ENCODE measurements at regions of chr17 and their contacts with region 1.

Region 1: GRCh38 chr17:27544350-27545131 is 86.4 kb upstream of the LGALS9 start:
- DNase-seq: peak; percentile 48
- ATAC-seq: peak; percentile 74
- H3K4me3 Mint-ChIP-seq: peak overlapping the region; percentile 72
- H3K27ac Mint-ChIP-seq: peak overlapping the region; percentile 90
- H3K4me1 Mint-ChIP-seq: peaks cover 76% of the 10 kb centered on the region
- H3K27me3 Mint-ChIP-seq: no peaks in the 10 kb centered on the region
- CTCF ChIP-seq: no peak

Region 2: DNA sequence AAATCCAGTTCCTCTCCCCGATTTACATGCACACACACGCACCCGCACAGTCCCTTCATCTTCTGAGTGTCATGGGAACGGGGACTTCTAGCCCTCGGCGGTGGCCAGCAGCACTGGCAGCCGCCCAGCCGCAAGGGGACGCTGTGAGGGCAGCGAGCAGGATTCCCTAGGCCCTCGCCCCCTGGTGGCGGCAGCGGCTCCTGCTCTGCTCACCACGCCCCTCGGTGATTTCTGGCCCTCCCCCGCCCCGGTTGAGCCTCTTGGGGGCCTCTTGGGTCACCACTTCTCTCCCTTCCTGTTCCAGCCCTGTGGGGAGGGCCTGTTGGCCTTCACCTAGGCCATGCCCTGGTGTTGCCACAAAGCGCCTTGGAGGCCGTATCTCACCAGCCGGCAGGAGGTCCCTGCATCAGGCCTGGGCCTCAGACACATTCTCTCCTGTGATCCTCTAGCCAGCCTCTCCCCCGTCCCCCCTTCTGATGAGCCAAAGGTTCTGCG is 163.5 kb before region 1 on chr17:
- CTCF ChIA-PET with region 1: no interaction called
- POLR2A ChIA-PET with region 1: no interaction called
- intact Hi-C with region 1: loop called (anchors 5 kb)
- DNase-seq: peak; percentile 70
- ATAC-seq: peak; percentile 94
- H3K4me3 Mint-ChIP-seq: no peak overlapping the region
- H3K27ac Mint-ChIP-seq: no peak overlapping the region
- H3K4me1 Mint-ChIP-seq: peaks cover 6% of the 10 kb centered on the region
- H3K27me3 Mint-ChIP-seq: peaks cover 18% of the 10 kb centered on the region
- CTCF ChIP-seq: peak; percentile 35

Region 3: DNA sequence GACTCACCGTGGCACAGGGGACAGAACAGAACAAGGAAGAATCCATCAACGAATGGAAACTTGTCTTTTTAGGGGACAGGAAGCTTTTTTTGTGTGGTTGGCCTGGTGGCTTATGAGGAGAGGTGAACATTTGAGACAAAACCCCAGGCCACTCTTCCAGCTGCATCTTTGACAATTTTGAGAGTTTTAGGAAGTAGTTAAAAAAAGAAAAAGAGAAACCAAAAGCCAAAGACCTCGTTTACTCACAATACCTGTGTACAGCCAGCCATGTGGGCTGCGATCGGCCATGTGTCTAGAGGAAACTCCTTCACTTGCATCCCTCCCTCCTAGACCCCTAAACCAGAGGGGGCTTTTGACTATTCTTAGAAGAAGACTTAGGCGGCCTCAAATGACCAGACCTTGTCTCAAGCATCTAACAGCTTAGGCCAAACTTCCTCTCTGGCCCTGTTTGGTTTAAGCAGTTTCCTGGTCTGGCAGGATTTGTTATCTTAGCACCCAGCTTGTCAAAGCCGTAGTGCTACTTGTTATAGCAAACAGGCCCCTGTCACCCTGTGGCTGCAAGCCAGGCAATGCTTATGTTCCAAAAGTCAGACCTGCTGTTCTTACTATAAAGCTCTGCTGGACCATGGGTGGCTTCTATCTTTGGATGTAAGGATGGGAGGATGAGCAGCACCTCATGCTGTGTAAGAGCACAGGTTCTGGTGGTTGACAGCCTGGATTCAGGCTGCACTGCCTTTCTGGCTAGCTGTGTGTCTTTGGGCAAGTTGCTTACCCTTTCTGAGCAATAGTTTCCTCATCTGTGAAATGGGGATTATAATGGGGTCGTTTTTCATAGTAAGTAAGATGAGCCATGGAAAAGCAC is 70.6 kb before region 1 on chr17:
- CTCF ChIA-PET with region 1: no interaction called
- POLR2A ChIA-PET with region 1: interaction called, 23 read pairs
- intact Hi-C with region 1: loop called (anchors 1 kb)
- DNase-seq: no peak
- ATAC-seq: no peak
- H3K4me3 Mint-ChIP-seq: peak overlapping the region; percentile 71
- H3K27ac Mint-ChIP-seq: peak overlapping the region; percentile 99
- H3K4me1 Mint-ChIP-seq: peaks cover 84% of the 10 kb centered on the region
- H3K27me3 Mint-ChIP-seq: no peaks in the 10 kb centered on the region
- CTCF ChIP-seq: no peak

Region 4: GRCh38 chr17:27506348-27507231 is 38.0 kb before region 1 on chr17:
- CTCF ChIA-PET with region 1: no interaction called
- POLR2A ChIA-PET with region 1: interaction called, 15 read pairs
- intact Hi-C with region 1: loop called (anchors 1 kb)
- DNase-seq: peak; percentile 49
- ATAC-seq: peak; percentile 88
- H3K4me3 Mint-ChIP-seq: peak overlapping the region; percentile 62
- H3K27ac Mint-ChIP-seq: peak overlapping the region; percentile 83
- H3K4me1 Mint-ChIP-seq: peaks cover 46% of the 10 kb centered on the region
- H3K27me3 Mint-ChIP-seq: no peaks in the 10 kb centered on the region
- CTCF ChIP-seq: no peak

Region 5: GRCh38 chr17:27529230-27529796 is 15.2 kb before region 1 on chr17:
- CTCF ChIA-PET with region 1: interaction called, 5 read pairs
- POLR2A ChIA-PET with region 1: interaction called, 6 read pairs
- intact Hi-C with region 1: loop called (anchors 2 kb)
- DNase-seq: no peak
- ATAC-seq: no peak
- H3K4me3 Mint-ChIP-seq: no peak overlapping the region
- H3K27ac Mint-ChIP-seq: no peak overlapping the region
- H3K4me1 Mint-ChIP-seq: peaks cover 60% of the 10 kb centered on the region
- H3K27me3 Mint-ChIP-seq: no peaks in the 10 kb centered on the region
- CTCF ChIP-seq: no peak

Region 6: GRCh38 chr17:27586203-27586721 is 41.7 kb after region 1 on chr17:
- CTCF ChIA-PET with region 1: no interaction called
- POLR2A ChIA-PET with region 1: no interaction called
- intact Hi-C with region 1: loop called (anchors 2 kb)
- DNase-seq: no peak
- ATAC-seq: no peak
- H3K4me3 Mint-ChIP-seq: no peak overlapping the region
- H3K27ac Mint-ChIP-seq: no peak overlapping the region
- H3K4me1 Mint-ChIP-seq: peaks cover 18% of the 10 kb centered on the region
- H3K27me3 Mint-ChIP-seq: no peaks in the 10 kb centered on the region
- CTCF ChIP-seq: no peak